K562 (cell line): ENCODE measurements at regions of chr16 and their contacts with region 1.

Region 1: DNA sequence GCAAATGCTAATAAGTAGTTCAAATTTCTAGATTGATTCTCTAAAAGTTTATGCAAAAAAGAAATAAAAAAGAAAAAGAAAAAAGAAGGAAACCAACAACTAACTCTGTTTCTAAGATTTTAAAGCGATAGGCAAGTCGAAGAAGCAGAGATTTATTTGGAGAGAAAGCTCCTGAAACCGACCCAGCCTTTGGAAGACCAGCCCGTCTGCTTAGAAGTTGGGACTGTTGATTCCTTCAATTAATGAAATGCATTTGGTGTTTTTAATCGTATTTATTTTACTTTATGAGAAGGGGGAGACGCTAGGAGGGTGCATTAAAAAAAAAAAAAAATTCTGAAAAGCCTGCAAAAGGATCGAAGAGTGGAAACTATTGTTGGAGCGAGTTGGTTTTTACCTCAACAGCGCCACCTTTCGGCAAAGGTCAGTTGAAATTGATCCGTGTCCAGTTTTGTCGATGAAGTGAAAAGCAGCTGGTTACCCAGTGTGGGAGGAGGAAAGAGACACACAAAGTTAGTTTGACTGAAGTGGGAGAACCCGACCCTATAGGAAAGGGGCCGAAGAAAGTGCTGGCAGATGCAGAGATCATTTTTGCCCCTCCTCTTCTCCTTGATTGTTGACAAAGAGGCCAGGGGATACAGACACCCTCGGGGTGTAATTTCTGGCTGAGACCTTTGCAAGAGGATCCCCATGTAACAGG is 1.5 kb upstream of the MAF start:
- DNase-seq: peak; percentile 60 to 76 (median 64)
- ATAC-seq: peak; percentile 84
- H3K4me3 ChIP-seq: no peak overlapping the region
- H3K27ac ChIP-seq: no peak overlapping the region
- H3K4me1 ChIP-seq: peaks cover 0 to 27% of the 10 kb centered on the region in 2 experiments; a peak in 3 of 5 replicates
- H3K27me3 ChIP-seq: peaks cover 13 to 19% of the 10 kb centered on the region in 2 experiments
- CTCF ChIP-seq: peak; percentile 62 to 85 (median 82)
- EP300 ChIP-seq: 0 out of 2 replicates have a peak, but pooled peaks have one; percentile 11
- POLR2A ChIP-seq: no peak
- RAD21 ChIP-seq: peak; percentile 54 to 77

Region 2: GRCh38 chr16:78503602-78504001 is 1098.5 kb before region 1 on chr16:
- CTCF ChIA-PET with region 1: no interaction called
- POLR2A ChIA-PET with region 1: no interaction called
- in situ Hi-C with region 1: no loop called
- intact Hi-C with region 1: loop called (anchors 2 kb)
- DNase-seq: peak; percentile 52 to 74 (median 70)
- ATAC-seq: peak; percentile 70
- H3K4me3 ChIP-seq: no peak overlapping the region
- H3K27ac ChIP-seq: no peak overlapping the region
- H3K4me1 ChIP-seq: no peaks in the 10 kb centered on the region
- H3K27me3 ChIP-seq: peaks cover 23 to 42% of the 10 kb centered on the region in 2 experiments
- CTCF ChIP-seq: peak; percentile 61 to 74 (median 72); a peak in 5 of 6 replicates
- EP300 ChIP-seq: no peak
- POLR2A ChIP-seq: no peak
- RAD21 ChIP-seq: peak; percentile 57 to 61

Region 3: GRCh38 chr16:78705694-78706093 is 896.4 kb before region 1 on chr16:
- CTCF ChIA-PET with region 1: no interaction called
- POLR2A ChIA-PET with region 1: no interaction called
- in situ Hi-C with region 1: no loop called
- intact Hi-C with region 1: loop called (anchors 5 kb)
- DNase-seq: peak; percentile 30 to 35 (median 34)
- ATAC-seq: no peak
- H3K4me3 ChIP-seq: no peak overlapping the region
- H3K27ac ChIP-seq: no peak overlapping the region
- H3K4me1 ChIP-seq: no peaks in the 10 kb centered on the region
- H3K27me3 ChIP-seq: peaks cover 2 to 11% of the 10 kb centered on the region in 2 experiments; a peak in 2 of 5 replicates
- CTCF ChIP-seq: peak; percentile 44 to 70 (median 45); a peak in 5 of 6 replicates
- EP300 ChIP-seq: no peak
- POLR2A ChIP-seq: no peak
- RAD21 ChIP-seq: peak; percentile 75 to 81

Region 4: GRCh38 chr16:79334127-79334526 is 268.0 kb before region 1 on chr16:
- CTCF ChIA-PET with region 1: no interaction called
- POLR2A ChIA-PET with region 1: no interaction called
- in situ Hi-C with region 1: no loop called
- intact Hi-C with region 1: loop called (anchors 2 kb)
- DNase-seq: peak; percentile 65 to 79 (median 70)
- ATAC-seq: peak; percentile 99
- H3K4me3 ChIP-seq: no peak overlapping the region
- H3K27ac ChIP-seq: no peak overlapping the region
- H3K4me1 ChIP-seq: no peaks in the 10 kb centered on the region
- H3K27me3 ChIP-seq: peaks cover 30 to 31% of the 10 kb centered on the region in 2 experiments
- CTCF ChIP-seq: peak; percentile 63 to 87 (median 69)
- EP300 ChIP-seq: no peak
- POLR2A ChIP-seq: no peak
- RAD21 ChIP-seq: peak in 1 of 2 experiments; percentile 48; a peak in 1 of 4 replicates